Activated CD4-positive, alpha-beta memory T cell treated with anti-CD3 and anti-CD28 coated beads, Interleukin-2, amount 10 ng/mL, durations not matched to agents 7 days and 5 days (primary cell): ENCODE measurements at regions of chr14 and their contacts with region 1.

Region 1: DNA sequence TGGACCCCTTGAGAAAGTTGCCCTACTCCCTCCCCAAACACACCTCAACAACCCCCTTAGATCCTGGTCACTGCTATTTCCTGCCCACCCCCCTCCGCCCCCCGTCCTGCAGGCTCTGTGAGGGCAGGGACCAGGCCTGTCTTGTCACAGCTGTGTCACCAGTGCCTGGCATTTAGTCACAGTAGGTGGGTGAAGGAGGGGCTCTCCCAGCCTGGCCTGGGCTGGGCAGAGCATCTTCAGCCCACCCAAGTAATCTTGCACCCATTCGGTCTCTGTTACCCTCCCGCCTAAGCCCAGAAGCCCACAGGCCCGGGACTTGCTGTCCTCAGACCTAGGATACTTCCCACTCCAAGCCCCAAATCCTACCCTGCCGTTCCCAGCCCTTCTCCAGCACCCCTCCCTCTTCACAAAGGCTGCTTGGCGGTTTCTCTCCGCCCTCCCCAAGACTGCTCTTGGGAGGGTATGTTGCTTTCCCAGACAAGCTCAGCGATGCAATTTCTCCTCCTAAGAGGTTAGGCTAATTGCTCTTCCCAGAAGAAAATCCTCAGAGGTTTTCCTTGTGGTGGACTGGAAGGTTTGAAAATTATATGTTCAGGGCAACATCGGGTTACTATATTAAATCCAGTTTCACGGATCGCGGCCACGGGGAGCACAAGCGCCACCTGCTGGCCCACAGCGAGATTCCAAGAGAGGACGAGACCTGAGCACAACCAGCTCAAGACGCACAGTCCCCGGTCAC is 50.8 kb upstream of the ZFP36L1 start:
- DNase-seq: peak; percentile 76
- H3K4me3 Mint-ChIP-seq: no peak overlapping the region
- H3K27ac Mint-ChIP-seq: no peak overlapping the region
- H3K4me1 Mint-ChIP-seq: peaks cover 20% of the 10 kb centered on the region
- H3K27me3 Mint-ChIP-seq: peaks cover 13% of the 10 kb centered on the region

Region 2: DNA sequence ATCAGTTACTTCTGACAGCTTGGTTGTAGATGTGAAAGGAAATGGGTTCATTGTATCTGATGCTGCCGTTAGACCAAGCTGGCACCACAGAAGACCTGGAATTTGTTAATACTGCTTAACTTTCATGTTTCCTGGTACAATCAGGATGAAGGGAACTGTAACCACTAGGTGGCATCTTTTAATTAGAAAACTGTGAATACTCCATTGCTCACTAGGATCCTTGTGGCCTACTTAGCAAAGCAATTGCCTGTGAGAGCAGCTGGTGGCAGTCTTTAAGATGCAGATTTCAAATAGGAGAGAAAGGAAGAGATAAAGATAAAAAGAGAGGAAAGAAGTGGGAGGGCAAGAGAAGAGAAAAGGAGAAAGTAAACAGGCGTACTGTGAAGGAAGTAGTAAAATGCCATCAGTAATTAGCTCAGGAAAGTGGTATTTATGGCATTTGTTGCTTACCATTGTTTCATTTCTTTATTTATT is 909.6 kb before region 1 on chr14:
- CTCF ChIA-PET with region 1: interaction called, 11 read pairs
- POLR2A ChIA-PET with region 1: no interaction called
- DNase-seq: no peak
- H3K4me3 Mint-ChIP-seq: no peak overlapping the region
- H3K27ac Mint-ChIP-seq: no peak overlapping the region
- H3K4me1 Mint-ChIP-seq: peaks cover 2% of the 10 kb centered on the region
- H3K27me3 Mint-ChIP-seq: no peaks in the 10 kb centered on the region

Region 3: GRCh38 chr14:68248481-68249255 is 595.0 kb before region 1 on chr14:
- CTCF ChIA-PET with region 1: interaction called, 18 read pairs
- POLR2A ChIA-PET with region 1: no interaction called
- DNase-seq: no peak
- H3K4me3 Mint-ChIP-seq: no peak overlapping the region
- H3K27ac Mint-ChIP-seq: no peak overlapping the region
- H3K4me1 Mint-ChIP-seq: peaks cover 15% of the 10 kb centered on the region
- H3K27me3 Mint-ChIP-seq: no peaks in the 10 kb centered on the region

Region 4: DNA sequence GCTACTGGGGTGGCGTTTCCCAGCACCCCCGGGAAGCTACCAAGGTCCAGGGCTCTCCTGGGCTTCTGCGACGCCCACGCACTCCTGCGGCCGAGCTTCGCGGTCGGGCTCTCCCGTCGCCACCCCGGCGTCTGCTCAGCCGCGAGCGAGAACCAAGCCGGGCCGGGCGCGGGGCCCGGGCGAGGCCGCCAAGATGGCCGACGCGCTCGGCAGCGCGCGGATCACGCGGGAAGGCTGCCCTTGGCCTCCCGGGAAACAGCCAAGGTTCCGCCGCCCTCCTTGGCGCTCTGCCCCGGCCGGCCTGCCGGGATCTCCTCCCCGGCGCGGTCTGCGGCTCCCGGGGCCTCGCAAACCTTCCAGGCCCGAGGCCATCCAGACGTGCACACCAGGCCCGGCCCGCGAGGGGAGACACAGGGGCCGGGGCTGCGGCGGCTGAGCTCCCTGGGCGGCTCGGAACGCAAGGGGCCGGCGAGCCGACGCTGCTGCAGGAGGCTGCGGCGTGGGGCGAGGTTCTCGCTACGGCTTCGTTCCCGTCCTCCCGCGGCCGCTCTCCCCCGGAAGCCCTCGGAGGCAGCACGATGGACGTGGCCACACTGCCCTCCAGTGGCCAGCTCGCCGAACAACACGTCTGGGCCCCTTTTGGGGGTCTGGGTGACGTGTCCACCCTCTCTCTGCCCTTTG is 27.2 kb before region 1 on chr14:
- CTCF ChIA-PET with region 1: interaction called, 30 read pairs
- POLR2A ChIA-PET with region 1: interaction called, 7 read pairs
- DNase-seq: peak; percentile 90
- H3K4me3 Mint-ChIP-seq: peak overlapping the region; percentile 72
- H3K27ac Mint-ChIP-seq: peak overlapping the region; percentile 84
- H3K4me1 Mint-ChIP-seq: peaks cover 53% of the 10 kb centered on the region
- H3K27me3 Mint-ChIP-seq: no peaks in the 10 kb centered on the region

Region 5: GRCh38 chr14:68862954-68863594 is 19.4 kb after region 1 on chr14:
- CTCF ChIA-PET with region 1: interaction called, 11 read pairs
- POLR2A ChIA-PET with region 1: no interaction called
- DNase-seq: peak; percentile 74
- H3K4me3 Mint-ChIP-seq: no peak overlapping the region
- H3K27ac Mint-ChIP-seq: no peak overlapping the region
- H3K4me1 Mint-ChIP-seq: no peaks in the 10 kb centered on the region
- H3K27me3 Mint-ChIP-seq: no peaks in the 10 kb centered on the region